GM18951 (cell line): ENCODE measurements at regions of chr21 and their contacts with region 1.

Region 1: DNA sequence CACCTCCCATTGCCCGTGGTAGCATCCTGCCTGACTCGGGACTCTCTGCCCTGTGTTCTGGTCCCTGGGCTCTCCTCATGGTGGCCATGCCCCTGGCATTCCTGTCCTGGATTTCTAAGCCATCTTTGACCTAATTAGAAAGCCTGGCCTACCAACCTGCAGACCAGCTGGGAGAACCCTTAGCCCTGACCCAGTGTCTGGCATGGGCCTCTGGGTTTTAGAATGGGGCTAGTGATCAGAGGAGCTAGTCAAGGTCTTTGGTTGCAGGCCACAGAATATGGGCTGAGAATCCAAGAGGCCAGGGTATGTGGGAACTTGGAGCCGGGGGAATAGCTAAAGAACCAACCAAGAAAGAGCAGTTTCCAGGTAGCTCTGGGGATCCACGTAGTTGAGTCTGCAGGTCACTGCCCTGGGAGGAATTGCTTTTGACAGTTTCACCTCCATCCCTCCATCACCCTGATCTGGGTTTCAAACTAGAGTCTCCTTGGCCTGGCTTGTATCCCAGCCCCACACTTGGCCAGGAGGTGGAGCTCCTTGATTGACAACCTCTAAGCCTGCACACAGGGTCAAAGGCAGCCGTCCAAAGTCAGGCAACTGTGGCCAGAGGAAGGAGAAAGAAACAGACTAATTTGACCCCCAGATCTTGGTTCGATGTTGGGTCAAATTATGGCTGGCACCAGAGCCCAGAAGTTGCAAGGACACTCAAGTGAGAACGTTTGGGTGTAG is 54.7 kb upstream of the ABCG1 start:
- POLR2A ChIP-seq: no peak

Region 2: GRCh38 chr21:41068967-41069642 is 1095.1 kb before region 1 on chr21:
- in situ Hi-C with region 1: no loop called
- POLR2A ChIP-seq: no peak

Region 3: GRCh38 chr21:42440187-42440792 is 276.1 kb after region 1 on chr21:
- in situ Hi-C with region 1: loop called (anchors 10 kb)
- POLR2A ChIP-seq: no peak